ENCODE measurements at regions of chr3 and their contacts with region 1.

Region 1: GRCh38 chr3:171187706-171188290 is 161.3 kb upstream of the SLC2A2 start:
- DNase-seq: no peak
- ATAC-seq: peak; percentile 51 to 72 (median 64)
- H3K4me3 ChIP-seq: no peak overlapping the region
- H3K27ac ChIP-seq: no peak overlapping the region
- H3K4me1 ChIP-seq: peaks cover 0 to 42% (median 12%) of the 10 kb centered on the region in 12 donors
- H3K27me3 ChIP-seq: no peaks in the 10 kb centered on the region
- CTCF ChIP-seq: peak; percentile 39 to 72 (median 54)
- POLR2A ChIP-seq: no peak

Region 2: DNA sequence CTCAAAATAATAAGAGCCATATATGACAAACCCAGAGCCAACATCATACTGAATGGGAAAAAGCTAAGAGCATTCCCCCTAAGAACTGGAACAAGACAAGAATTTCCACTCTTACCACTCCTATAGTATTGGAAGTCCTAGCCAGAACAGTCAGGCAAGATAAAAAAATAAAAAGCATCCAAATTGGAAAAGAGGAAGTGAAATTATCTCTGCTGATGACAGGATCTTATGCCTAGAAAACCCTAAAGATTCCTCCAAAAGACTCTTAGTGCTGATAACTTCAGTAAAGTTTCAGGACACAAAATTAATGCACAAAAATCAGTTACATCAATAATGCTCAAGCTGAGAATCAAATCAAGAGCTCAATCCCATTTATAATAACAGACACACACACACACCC is 115.4 kb before region 1 on chr3:
- intact Hi-C with region 1: no loop called
- DNase-seq: no peak
- ATAC-seq: no peak
- H3K4me3 ChIP-seq: no peak overlapping the region
- H3K27ac ChIP-seq: no peak overlapping the region
- H3K4me1 ChIP-seq: peaks cover 0 to 9% (median 0%) of the 10 kb centered on the region in 12 donors
- H3K27me3 ChIP-seq: no peaks in the 10 kb centered on the region
- CTCF ChIP-seq: no peak
- POLR2A ChIP-seq: no peak

Region 3: GRCh38 chr3:171284308-171285075 is 96.7 kb after region 1 on chr3:
- intact Hi-C with region 1: loop called in 1 of 10 experiments (anchors 10 kb)
- DNase-seq: peak in 2 of 5 donors; percentile 36 to 48
- ATAC-seq: peak; percentile 66 to 91 (median 77)
- H3K4me3 ChIP-seq: no peak overlapping the region
- H3K27ac ChIP-seq: peak overlapping the region in 11 of 12 donors; percentile 19 to 81 (median 63)
- H3K4me1 ChIP-seq: peaks cover 0 to 52% (median 30%) of the 10 kb centered on the region in 12 donors
- H3K27me3 ChIP-seq: no peaks in the 10 kb centered on the region
- CTCF ChIP-seq: no peak
- POLR2A ChIP-seq: no peak

Region 4: DNA sequence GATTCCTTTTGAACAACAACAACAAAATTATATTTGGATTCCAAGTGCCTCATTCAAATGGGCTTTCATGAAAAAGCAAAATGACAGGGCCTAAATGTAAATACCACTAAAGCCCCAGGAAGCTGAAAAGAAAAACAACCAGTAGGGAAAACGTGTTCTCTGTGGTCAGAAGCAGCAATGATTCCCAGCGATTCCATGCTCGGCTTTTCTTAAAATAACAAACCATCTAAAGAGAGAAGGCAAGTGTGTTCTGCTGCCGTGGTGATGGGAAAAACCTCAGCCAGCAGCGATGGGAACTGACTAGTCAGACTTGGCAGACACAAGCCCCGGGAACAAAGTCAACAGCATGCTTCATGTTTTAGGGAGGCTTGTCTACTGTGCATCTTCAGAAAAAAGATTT is 118.8 kb after region 1 on chr3:
- intact Hi-C with region 1: loop called in 5 of 10 experiments (anchors 5 to 10 kb)
- DNase-seq: peak; percentile 76 to 84 (median 79)
- ATAC-seq: peak; percentile 91 to 94 (median 93)
- H3K4me3 ChIP-seq: peak overlapping the region in 5 of 12 donors; percentile 6 to 32 (median 7)
- H3K27ac ChIP-seq: peak overlapping the region; percentile 54 to 85 (median 75)
- H3K4me1 ChIP-seq: peaks cover 0 to 34% (median 15%) of the 10 kb centered on the region in 12 donors
- H3K27me3 ChIP-seq: no peaks in the 10 kb centered on the region
- CTCF ChIP-seq: no peak
- POLR2A ChIP-seq: no peak

Region 5: GRCh38 chr3:171383206-171384018 is 195.6 kb after region 1 on chr3:
- intact Hi-C with region 1: loop called in 1 of 10 experiments (anchors 10 kb)
- DNase-seq: no peak
- ATAC-seq: no peak
- H3K4me3 ChIP-seq: no peak overlapping the region
- H3K27ac ChIP-seq: no peak overlapping the region
- H3K4me1 ChIP-seq: peaks cover 0 to 65% (median 26%) of the 10 kb centered on the region in 12 donors
- H3K27me3 ChIP-seq: no peaks in the 10 kb centered on the region
- CTCF ChIP-seq: no peak
- POLR2A ChIP-seq: no peak

Region 6: DNA sequence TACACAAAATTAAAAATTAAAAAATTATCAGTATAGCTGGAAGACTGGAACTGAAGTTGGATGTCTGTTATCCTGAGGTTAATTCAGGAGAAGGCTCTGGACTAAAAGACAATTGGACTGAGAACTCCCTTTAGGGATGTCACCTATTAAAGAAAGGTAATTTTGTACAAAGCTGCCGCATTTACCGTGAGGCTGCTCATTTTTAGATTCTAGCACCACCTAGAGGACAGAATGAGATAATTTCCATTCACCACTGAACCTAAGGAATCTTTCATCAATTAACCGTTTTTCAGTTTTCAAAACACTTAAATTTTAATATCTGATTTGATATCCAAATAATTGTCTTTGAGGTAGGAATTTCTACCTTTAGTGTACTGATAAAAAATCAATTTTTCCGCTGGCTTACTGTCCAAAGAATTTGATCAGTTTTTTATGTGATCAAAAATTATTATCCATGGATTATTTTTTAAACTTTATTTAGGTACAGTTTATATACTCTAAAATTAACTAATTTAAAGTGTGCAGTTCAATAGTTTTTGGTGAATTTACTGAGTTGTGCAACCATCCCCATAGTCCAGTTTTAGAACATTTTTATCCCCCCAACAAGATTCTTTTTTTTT is 379.1 kb after region 1 on chr3:
- intact Hi-C with region 1: loop called in 8 of 10 experiments (anchors 2 to 10 kb)
- DNase-seq: no peak
- ATAC-seq: peak in 2 of 4 donors; percentile 37 to 44
- H3K4me3 ChIP-seq: no peak overlapping the region
- H3K27ac ChIP-seq: no peak overlapping the region
- H3K4me1 ChIP-seq: peaks cover 0 to 26% (median 8%) of the 10 kb centered on the region in 12 donors
- H3K27me3 ChIP-seq: no peaks in the 10 kb centered on the region
- CTCF ChIP-seq: peak; percentile 62 to 85 (median 76)
- POLR2A ChIP-seq: no peak

Measured in heart left ventricle (tissue), 16 donors.